HEK293 (cell line): ENCODE measurements at regions of chr6 and their contacts with region 1.

Region 1: DNA sequence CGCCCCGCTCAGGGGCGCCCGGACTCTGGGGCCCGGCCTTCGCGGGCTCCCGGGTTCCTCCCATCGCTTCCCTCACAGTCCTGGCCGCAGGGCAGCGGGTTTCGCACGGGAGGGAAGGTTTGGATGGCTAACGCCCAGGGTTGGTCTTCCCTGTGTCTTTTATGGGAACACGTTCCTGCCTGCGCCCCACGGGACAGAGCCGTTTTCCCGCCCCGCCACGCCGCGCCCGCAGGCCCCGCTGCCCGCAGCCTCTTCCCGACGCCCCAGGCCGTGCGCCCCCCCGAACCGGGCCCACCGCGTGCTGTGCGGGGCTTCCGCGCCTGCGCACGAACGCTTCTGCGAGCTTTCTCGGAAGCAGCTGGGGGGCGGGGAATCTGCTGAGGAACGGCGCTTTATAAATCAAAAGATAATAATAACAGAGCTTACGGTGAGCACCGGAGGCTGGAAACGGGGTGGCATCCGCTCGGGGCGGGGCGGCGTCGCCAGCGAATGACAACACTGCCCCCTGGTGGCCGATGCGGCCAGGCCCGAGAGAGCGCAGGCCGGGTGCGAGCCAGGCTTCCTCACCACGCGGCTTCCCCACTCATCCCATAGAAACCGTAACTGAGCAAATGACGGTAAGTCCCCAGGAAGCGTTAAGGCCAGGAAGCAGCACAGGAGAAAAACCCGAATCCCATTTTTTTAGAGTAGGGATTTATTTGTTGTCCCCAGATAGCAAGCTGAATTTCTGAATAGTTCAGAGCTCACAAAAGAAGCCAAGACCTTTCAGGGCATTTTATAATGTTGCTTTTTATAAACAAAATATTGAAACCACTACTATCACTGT is 116.4 kb downstream of the MYLK4 start:
- H3K4me3 ChIP-seq: peak overlapping the region; percentile 24
- H3K27ac ChIP-seq: peak overlapping the region; percentile 83
- H3K4me1 ChIP-seq: peaks cover 21% of the 10 kb centered on the region
- CTCF ChIP-seq: peak; percentile 97

Region 2: DNA sequence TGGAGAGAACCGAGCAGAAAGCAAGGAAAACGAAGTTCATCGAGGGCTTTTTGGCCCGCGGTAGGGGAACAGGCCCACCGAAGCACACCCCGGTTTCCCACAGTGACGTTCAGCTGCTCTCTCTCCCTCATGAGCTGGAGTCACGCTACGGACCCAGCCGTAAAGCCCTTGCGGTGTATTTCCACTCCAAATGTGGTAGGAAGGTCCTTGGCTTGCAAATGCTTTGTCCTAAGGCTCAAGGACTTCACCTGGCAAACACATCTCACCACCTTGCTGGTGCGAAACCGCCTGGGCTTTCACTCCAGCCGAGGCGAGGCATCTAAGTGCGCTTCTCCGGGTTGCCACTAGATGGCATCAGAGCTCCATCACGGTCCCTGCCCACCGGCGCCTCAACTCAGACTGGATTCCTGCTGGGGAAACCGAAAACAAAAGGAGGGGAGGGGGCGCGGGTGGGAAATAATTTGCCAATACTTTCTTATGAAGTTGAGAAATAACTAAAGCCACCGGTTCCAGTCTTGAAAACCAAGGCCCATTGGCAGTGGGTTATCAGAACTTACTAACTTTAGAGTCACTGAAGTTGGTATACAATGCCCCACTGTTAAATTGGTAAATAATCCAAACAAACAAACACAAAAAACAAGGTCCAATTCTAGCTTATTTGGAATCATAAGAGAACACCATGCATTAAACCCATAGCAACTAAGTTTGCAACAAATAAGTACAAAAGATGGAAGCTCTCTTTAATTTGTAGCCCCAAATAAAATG is 1038.1 kb before region 1 on chr6:
- CTCF ChIA-PET with region 1: interaction called, 34 read pairs
- POLR2A ChIA-PET with region 1: no interaction called
- H3K4me3 ChIP-seq: peak overlapping the region; percentile 5
- H3K27ac ChIP-seq: peak overlapping the region; percentile 90
- H3K4me1 ChIP-seq: peaks cover 31% of the 10 kb centered on the region
- CTCF ChIP-seq: peak; percentile 94

Region 3: DNA sequence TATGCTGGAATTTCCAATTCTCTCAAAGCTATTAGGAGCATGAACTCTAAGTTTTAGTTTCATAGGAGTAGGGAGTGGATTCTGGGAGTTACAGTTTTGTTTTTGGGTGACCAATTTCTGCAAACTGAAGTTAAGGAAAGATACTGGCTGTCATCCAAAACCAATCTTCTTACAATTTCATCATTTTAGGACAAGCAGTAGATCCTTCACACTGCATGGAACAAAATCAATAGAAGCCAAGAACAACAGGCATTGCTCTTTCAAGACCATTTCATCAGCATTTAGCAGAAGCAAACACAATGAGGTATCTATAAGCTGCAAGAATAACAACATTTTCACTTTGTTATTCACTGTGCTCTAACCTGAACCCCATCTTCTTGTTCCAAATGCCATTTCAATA is 561.9 kb before region 1 on chr6:
- CTCF ChIA-PET with region 1: no interaction called
- POLR2A ChIA-PET with region 1: no interaction called
- H3K4me3 ChIP-seq: no peak overlapping the region
- H3K27ac ChIP-seq: no peak overlapping the region
- H3K4me1 ChIP-seq: peaks cover 4% of the 10 kb centered on the region; the same call in 1 of the 2 replicates
- CTCF ChIP-seq: no peak

Region 4: GRCh38 chr6:2534406-2535042 is 99.8 kb before region 1 on chr6:
- CTCF ChIA-PET with region 1: no interaction called
- POLR2A ChIA-PET with region 1: no interaction called
- H3K4me3 ChIP-seq: no peak overlapping the region
- H3K27ac ChIP-seq: no peak overlapping the region
- H3K4me1 ChIP-seq: no peaks in the 10 kb centered on the region
- CTCF ChIP-seq: no peak

Region 5: DNA sequence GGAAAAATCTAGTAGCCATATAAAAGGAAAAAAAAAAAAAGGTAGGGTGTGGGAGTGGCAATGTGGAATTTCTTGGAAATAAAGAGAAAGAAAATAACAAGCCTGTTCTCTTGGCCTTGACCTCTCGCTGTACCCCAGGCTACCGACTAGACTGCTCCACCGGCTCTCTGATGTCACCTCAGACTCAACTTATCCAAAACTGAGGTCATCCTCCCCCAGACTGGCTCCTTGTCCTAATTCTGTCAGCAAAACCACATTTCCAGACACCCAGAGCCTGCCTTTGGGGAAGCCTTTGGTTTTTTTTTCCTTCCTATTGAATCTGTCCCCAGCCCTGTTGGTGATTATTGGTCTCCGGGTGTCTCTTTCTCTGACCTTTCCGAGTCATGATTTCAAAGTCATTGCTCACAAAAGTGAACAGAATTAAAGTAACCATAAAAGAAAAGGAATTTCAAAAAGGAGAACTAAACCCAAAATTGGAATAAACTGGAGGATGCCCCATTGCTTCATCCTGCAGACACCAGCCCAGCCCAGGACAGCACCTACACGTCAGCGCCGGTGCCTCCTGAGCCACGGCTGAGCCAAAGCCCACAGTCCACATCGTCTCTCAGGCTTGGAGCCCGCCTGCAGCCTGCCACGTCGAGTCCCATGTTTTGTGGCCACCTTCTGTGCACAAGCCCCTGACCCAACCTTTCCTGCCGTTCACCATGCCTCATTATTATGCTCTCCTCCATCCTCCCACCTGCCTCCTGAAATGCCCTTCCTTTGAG is 54.4 kb before region 1 on chr6:
- CTCF ChIA-PET with region 1: interaction called, 10 read pairs
- POLR2A ChIA-PET with region 1: no interaction called
- H3K4me3 ChIP-seq: no peak overlapping the region
- H3K27ac ChIP-seq: no peak overlapping the region
- H3K4me1 ChIP-seq: no peaks in the 10 kb centered on the region
- CTCF ChIP-seq: no peak

Region 6: GRCh38 chr6:2646346-2646745 is 12.0 kb after region 1 on chr6:
- CTCF ChIA-PET with region 1: interaction called, 30 read pairs
- POLR2A ChIA-PET with region 1: no interaction called
- H3K4me3 ChIP-seq: no peak overlapping the region
- H3K27ac ChIP-seq: no peak overlapping the region
- H3K4me1 ChIP-seq: no peaks in the 10 kb centered on the region
- CTCF ChIP-seq: no peak

Region 7: DNA sequence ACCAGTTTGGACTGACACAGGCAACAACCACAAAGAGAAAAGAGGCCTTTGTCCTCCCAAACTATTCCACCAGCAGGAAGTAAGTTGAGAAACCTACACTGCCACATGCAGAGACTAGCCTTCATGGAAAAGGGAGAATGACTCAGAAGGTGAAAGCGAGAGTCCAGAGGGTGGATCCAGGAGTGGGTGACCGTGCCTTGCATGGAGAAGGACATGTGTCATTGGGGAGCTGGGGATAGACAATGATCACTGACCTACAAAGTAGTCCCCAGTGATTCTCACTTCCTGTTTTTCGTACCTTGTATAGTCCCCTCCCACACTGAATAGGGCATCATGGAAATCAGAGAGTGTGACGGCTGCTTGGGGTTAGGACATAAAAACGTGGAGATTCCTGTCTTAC is 24.4 kb after region 1 on chr6:
- CTCF ChIA-PET with region 1: interaction called, 26 read pairs
- POLR2A ChIA-PET with region 1: no interaction called
- H3K4me3 ChIP-seq: no peak overlapping the region
- H3K27ac ChIP-seq: no peak overlapping the region
- H3K4me1 ChIP-seq: 0 out of 2 replicates have a peak, but pooled peaks cover 2% of the 10 kb centered on the region
- CTCF ChIP-seq: no peak